Caco-2 (cell line): ENCODE measurements at regions of chr1 and their contacts with region 1.

Region 1: GRCh38 chr1:72322910-72323309 is 40.6 kb upstream of the NEGR1 start:
- DNase-seq: no peak
- H3K4me3 ChIP-seq: no peak overlapping the region
- H3K4me3 Mint-ChIP-seq: no peak overlapping the region
- H3K27ac Mint-ChIP-seq: no peak overlapping the region
- H3K4me1 ChIP-seq: no peaks in the 10 kb centered on the region
- H3K4me1 Mint-ChIP-seq: no peaks in the 10 kb centered on the region
- H3K27me3 ChIP-seq: no peaks in the 10 kb centered on the region
- H3K27me3 Mint-ChIP-seq: no peaks in the 10 kb centered on the region
- CTCF ChIP-seq: no peak

Region 2: DNA sequence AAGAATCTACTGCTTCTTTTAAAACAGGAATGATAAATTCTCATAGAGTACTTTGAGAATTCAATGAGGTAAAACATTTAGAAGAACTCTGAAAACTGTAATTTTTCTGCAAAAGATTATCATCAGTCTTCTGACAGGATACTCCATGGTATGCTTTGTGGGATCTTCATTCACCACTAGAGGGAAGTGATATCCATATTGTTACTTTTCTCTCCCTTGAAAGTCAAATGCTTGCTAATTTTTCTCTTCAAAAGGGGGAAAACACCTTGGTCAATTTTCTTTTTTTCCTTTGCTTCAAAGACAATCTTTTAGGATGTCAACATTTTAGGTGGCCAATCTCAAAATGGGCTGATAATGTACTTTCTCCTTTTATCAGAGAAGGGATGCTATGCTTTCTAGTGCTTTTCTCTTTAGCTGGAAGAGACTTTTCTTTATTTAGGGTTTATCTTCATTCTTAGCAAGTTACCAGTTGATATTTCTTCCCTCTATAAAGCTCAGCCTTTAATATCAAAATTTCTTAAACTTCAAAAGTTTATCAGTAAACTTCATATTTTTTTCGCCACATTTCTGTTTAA is 136.1 kb before region 1 on chr1:
- CTCF ChIA-PET with region 1: no interaction called
- POLR2A ChIA-PET with region 1: no interaction called
- intact Hi-C with region 1: loop called (anchors 1 kb)
- DNase-seq: no peak
- H3K4me3 ChIP-seq: no peak overlapping the region
- H3K4me3 Mint-ChIP-seq: no peak overlapping the region
- H3K27ac Mint-ChIP-seq: no peak overlapping the region
- H3K4me1 ChIP-seq: no peaks in the 10 kb centered on the region
- H3K4me1 Mint-ChIP-seq: no peaks in the 10 kb centered on the region
- H3K27me3 ChIP-seq: no peaks in the 10 kb centered on the region
- H3K27me3 Mint-ChIP-seq: no peaks in the 10 kb centered on the region
- CTCF ChIP-seq: peak; percentile 34 to 44

Region 3: GRCh38 chr1:72379072-72379471 is 56.2 kb after region 1 on chr1:
- CTCF ChIA-PET with region 1: no interaction called
- POLR2A ChIA-PET with region 1: no interaction called
- intact Hi-C with region 1: no loop called
- DNase-seq: no peak
- H3K4me3 ChIP-seq: no peak overlapping the region
- H3K4me3 Mint-ChIP-seq: no peak overlapping the region
- H3K27ac Mint-ChIP-seq: no peak overlapping the region
- H3K4me1 ChIP-seq: no peaks in the 10 kb centered on the region
- H3K4me1 Mint-ChIP-seq: no peaks in the 10 kb centered on the region
- H3K27me3 ChIP-seq: no peaks in the 10 kb centered on the region
- H3K27me3 Mint-ChIP-seq: no peaks in the 10 kb centered on the region
- CTCF ChIP-seq: no peak

Region 4: GRCh38 chr1:72635719-72636118 is 312.8 kb after region 1 on chr1:
- CTCF ChIA-PET with region 1: no interaction called
- POLR2A ChIA-PET with region 1: no interaction called
- intact Hi-C with region 1: no loop called
- DNase-seq: no peak
- H3K4me3 ChIP-seq: no peak overlapping the region
- H3K4me3 Mint-ChIP-seq: no peak overlapping the region
- H3K27ac Mint-ChIP-seq: no peak overlapping the region
- H3K4me1 ChIP-seq: no peaks in the 10 kb centered on the region
- H3K4me1 Mint-ChIP-seq: no peaks in the 10 kb centered on the region
- H3K27me3 ChIP-seq: no peaks in the 10 kb centered on the region
- H3K27me3 Mint-ChIP-seq: peaks cover 5% of the 10 kb centered on the region
- CTCF ChIP-seq: no peak

Region 5: DNA sequence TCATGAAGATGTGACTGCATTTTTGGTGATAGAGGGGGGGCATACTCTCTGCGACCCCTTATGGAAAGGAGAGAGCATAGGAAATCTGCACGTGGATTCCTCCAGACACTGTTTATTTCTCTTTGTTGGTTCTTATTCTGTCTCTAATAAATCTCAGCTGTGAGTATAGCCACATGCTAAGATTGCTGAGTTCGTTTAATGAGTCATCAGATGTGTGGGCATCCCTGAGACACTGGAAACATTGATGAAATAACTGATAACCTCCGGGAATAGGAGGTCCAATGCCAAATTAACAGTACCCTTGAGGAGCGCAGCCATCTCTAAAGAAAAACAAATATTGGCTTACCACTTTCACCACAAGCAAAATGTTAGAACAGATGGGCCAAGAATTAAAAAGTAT is 839.7 kb after region 1 on chr1:
- CTCF ChIA-PET with region 1: no interaction called
- POLR2A ChIA-PET with region 1: no interaction called
- intact Hi-C with region 1: no loop called
- DNase-seq: no peak
- H3K4me3 ChIP-seq: no peak overlapping the region
- H3K4me3 Mint-ChIP-seq: no peak overlapping the region
- H3K27ac Mint-ChIP-seq: no peak overlapping the region
- H3K4me1 ChIP-seq: no peaks in the 10 kb centered on the region
- H3K4me1 Mint-ChIP-seq: no peaks in the 10 kb centered on the region
- H3K27me3 ChIP-seq: no peaks in the 10 kb centered on the region
- H3K27me3 Mint-ChIP-seq: no peaks in the 10 kb centered on the region
- CTCF ChIP-seq: no peak